ENCODE measurements at regions of chr4 and their contacts with region 1.

Region 1: GRCh38 chr4:15882675-15883086 is 55.9 kb downstream of the FGFBP1 start:
- DNase-seq: peak; percentile 44
- ATAC-seq: peak; percentile 97
- H3K4me3 Mint-ChIP-seq: no peak overlapping the region
- H3K27ac Mint-ChIP-seq: no peak overlapping the region
- H3K4me1 Mint-ChIP-seq: 0 out of 2 replicates have a peak, but pooled peaks cover 3% of the 10 kb centered on the region
- H3K27me3 Mint-ChIP-seq: no peaks in the 10 kb centered on the region
- CTCF ChIP-seq: peak; percentile 66

Region 2: GRCh38 chr4:15805583-15806517 is 76.8 kb before region 1 on chr4:
- CTCF ChIA-PET with region 1: interaction called, 128 read pairs
- POLR2A ChIA-PET with region 1: interaction called, 3 read pairs
- DNase-seq: peak; percentile 28
- ATAC-seq: peak; percentile 90
- H3K4me3 Mint-ChIP-seq: no peak overlapping the region
- H3K27ac Mint-ChIP-seq: no peak overlapping the region
- H3K4me1 Mint-ChIP-seq: peaks cover 2% of the 10 kb centered on the region; the same call in 1 of the 2 replicates
- H3K27me3 Mint-ChIP-seq: no peaks in the 10 kb centered on the region
- CTCF ChIP-seq: peak; percentile 53

Region 3: DNA sequence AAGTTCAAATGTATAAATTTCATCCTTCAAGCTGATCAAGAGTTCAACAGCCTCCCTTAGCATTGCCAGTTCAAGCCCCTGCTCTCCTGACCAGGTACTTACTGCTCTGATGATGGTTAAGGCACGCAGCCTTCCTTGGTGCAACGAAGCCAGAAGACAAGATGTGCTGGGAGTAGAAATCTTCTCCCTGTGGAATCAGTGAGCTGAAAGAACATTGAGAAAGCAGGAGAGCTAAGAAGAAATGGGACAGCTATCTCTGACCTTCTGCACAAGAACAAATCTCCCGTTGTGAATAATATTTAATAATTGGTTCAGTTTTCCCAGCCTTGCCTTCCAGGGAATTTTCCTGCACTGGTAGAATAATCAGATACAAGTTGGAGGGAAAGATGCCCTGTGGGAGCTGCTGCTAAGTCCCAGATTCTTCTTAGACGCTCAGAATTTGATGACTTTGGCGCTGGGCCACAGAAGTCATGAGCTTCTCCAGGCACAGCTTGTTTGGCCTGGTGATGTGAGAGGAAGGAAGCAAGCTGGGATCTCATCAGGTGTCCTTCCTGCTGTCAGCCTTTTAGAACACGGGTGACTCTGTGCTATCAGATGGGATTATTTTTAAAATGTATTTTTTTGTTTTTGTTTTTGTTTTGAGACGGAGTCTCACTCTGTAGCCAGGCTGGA is 26.7 kb before region 1 on chr4:
- CTCF ChIA-PET with region 1: interaction called, 10 read pairs
- POLR2A ChIA-PET with region 1: no interaction called
- DNase-seq: no peak
- ATAC-seq: no peak
- H3K4me3 Mint-ChIP-seq: no peak overlapping the region
- H3K27ac Mint-ChIP-seq: no peak overlapping the region
- H3K4me1 Mint-ChIP-seq: no peaks in the 10 kb centered on the region
- H3K27me3 Mint-ChIP-seq: no peaks in the 10 kb centered on the region
- CTCF ChIP-seq: no peak

Region 4: DNA sequence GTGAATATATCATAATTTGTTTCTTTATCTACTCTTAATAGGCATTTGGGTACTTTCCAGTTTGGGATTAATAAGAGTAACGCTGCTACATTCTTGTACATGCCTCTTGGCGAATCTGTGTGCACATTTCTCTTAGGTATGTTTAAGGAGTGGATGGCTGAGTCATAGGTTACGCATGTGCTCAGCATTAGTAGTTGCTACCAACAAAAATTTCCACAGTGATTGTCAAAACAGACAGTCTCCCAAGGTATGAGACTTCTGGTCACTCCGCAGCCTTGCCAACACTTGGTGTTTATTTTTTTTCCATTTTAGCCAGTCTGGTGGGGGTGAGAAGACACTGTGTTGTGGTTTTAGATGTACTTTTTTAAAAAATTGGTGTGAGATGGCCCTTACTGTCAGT is 11.3 kb after region 1 on chr4:
- CTCF ChIA-PET with region 1: interaction called, 11 read pairs
- POLR2A ChIA-PET with region 1: no interaction called
- DNase-seq: no peak
- ATAC-seq: no peak
- H3K4me3 Mint-ChIP-seq: no peak overlapping the region
- H3K27ac Mint-ChIP-seq: no peak overlapping the region
- H3K4me1 Mint-ChIP-seq: peaks cover 15% of the 10 kb centered on the region
- H3K27me3 Mint-ChIP-seq: no peaks in the 10 kb centered on the region
- CTCF ChIP-seq: no peak

Region 5: DNA sequence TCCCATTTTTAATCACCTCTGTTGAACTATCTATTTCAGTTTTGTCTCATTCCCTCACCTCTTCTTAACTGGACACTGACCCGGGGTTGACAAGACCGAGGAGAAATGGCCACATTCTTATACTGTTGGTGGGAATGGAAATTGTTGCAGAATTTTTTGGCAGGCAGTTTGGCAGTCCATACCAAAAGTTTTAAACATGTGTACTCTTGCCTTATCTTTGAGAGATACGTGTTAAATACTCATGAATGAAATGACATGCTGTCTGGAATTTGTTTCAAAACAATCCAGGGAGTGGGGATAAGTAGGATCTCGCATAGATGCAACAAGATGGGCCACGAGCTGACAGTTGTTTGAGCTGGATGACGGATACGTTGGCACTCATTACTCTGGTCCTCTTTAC is 43.8 kb after region 1 on chr4:
- CTCF ChIA-PET with region 1: interaction called, 13 read pairs
- POLR2A ChIA-PET with region 1: no interaction called
- DNase-seq: no peak
- ATAC-seq: no peak
- H3K4me3 Mint-ChIP-seq: no peak overlapping the region
- H3K27ac Mint-ChIP-seq: no peak overlapping the region
- H3K4me1 Mint-ChIP-seq: no peaks in the 10 kb centered on the region
- H3K27me3 Mint-ChIP-seq: peaks cover 4% of the 10 kb centered on the region; the same call in 1 of the 2 replicates
- CTCF ChIP-seq: no peak

Region 6: DNA sequence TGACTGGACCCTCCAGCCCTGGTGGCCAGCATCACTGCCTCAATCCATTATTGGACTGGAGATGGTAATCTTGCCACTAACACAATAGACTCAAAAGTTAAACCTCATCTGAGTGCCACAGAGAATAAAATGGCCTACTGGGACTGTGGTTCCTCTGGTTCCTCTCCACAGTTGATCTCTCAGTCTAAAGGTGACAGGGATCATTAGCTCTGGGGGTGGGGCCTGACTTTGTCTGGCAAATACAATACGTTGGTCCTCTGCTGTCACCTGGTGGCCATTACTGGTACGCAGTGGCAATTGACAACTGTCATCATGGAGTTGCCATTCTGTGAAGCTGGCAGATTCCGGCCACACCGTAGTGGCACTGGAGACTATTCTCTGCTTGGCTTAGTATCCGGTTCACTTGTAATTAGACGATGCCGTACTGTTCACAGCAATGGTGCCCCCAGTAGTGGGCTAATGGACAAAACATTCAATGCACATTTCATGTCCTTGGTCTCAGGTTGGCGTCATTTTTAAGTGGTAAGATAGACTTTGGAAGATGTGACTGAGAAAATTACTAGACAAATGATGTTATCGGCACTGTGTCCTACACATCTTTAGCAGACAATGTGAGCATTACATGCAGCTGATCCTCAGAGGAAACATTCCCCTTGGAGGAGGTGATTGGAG is 73.6 kb after region 1 on chr4:
- CTCF ChIA-PET with region 1: interaction called, 136 read pairs
- POLR2A ChIA-PET with region 1: interaction called, 5 read pairs
- DNase-seq: peak; percentile 92
- ATAC-seq: peak; percentile 95
- H3K4me3 Mint-ChIP-seq: no peak overlapping the region
- H3K27ac Mint-ChIP-seq: no peak overlapping the region
- H3K4me1 Mint-ChIP-seq: peaks cover 12% of the 10 kb centered on the region
- H3K27me3 Mint-ChIP-seq: 0 out of 2 replicates have a peak, but pooled peaks cover 4% of the 10 kb centered on the region
- CTCF ChIP-seq: peak; percentile 84

Region 7: DNA sequence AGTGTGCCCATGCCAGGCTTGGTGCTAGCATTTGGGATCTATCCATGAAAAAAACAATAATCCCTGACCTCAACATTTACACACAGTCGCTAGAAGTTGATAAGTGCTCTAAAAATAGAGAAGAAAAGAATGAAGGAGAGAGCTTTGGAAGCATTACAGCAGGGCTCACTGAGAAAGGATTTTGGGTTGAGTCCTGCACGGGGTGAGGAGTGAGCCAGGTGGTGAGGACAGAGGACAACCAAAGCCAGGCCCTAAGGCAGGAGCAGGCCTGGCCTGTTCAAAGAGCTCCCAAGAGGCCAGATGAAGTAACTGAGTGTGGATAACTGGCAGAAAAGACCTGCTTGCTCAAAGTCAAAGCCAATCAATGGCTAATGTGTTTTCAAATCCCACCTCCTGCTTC is 221.8 kb after region 1 on chr4:
- CTCF ChIA-PET with region 1: no interaction called
- POLR2A ChIA-PET with region 1: no interaction called
- DNase-seq: no peak
- ATAC-seq: no peak
- H3K4me3 Mint-ChIP-seq: no peak overlapping the region
- H3K27ac Mint-ChIP-seq: no peak overlapping the region
- H3K4me1 Mint-ChIP-seq: no peaks in the 10 kb centered on the region
- H3K27me3 Mint-ChIP-seq: peaks cover 11% of the 10 kb centered on the region; the same call in 1 of the 2 replicates
- CTCF ChIP-seq: no peak

Region 8: GRCh38 chr4:16264798-16265197 is 382.1 kb after region 1 on chr4:
- CTCF ChIA-PET with region 1: interaction called, 19 read pairs
- POLR2A ChIA-PET with region 1: no interaction called
- DNase-seq: no peak
- ATAC-seq: no peak
- H3K4me3 Mint-ChIP-seq: no peak overlapping the region
- H3K27ac Mint-ChIP-seq: no peak overlapping the region
- H3K4me1 Mint-ChIP-seq: no peaks in the 10 kb centered on the region
- H3K27me3 Mint-ChIP-seq: no peaks in the 10 kb centered on the region
- CTCF ChIP-seq: no peak